Activated CD4-positive, alpha-beta T cell treated with anti-CD3 and anti-CD28 coated beads, Interleukin-2, amount 10 ng/mL, durations not matched to agents 7 days and 5 days (primary cell): ENCODE measurements at regions of chr19 and their contacts with region 1.

Region 1: GRCh38 chr19:18521885-18522624 is at the start of gene ELL:
- DNase-seq: peak; percentile 100
- H3K4me3 Mint-ChIP-seq: peak within 1 kb of the TSS; percentile 89
- H3K27ac Mint-ChIP-seq: peak within 1 kb of the TSS; percentile 97
- H3K4me1 Mint-ChIP-seq: peaks cover 16% of the 10 kb centered on the region
- H3K27me3 Mint-ChIP-seq: no peaks in the 10 kb centered on the region
- total RNA-seq, gene ELL: 20.3 to 20.9 TPM

Region 2: DNA sequence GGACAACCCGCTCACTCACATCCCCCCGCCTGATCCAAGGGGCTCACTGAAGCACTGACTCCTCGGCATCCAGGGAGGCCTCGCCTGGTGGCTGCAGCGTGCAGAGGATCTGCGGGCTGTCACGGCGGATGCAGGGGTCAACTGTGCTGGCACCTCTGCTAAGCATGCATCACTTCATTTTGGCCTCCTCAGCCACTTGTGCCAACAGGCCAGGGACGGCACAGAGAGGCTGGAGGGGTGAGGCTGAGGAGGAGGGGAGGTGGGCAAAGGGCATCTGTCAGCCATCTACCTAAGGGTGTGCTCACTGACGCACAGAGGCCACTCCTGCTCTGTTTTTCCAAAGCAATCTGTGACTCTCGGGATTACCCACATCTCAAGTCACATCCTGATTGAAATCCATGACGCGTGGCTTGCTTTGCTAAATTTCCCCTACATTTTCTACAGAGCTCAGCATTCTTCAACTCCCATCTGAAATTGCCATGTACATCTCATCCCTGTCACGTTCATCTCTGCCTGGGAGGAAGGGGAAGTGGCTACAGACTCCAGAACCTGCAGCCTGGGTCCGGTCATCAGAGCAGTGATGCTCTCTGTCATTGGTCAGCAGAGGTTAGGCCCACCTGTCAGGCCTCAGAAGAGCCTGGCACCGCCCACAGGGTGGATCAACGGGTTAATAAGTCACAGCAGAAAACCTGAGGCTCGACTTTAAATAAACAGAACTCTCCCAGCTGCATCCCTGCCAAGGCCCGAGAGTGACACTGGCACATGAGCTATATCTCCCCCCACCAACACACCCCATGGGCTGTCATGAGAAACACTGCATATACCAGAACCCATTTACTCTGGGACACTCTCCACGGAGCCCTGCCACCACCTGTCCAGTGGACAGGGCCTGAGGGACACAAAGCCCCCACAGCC is 17.8 kb before region 1 on chr19:
- CTCF ChIA-PET with region 1: interaction called, 31 read pairs
- POLR2A ChIA-PET with region 1: no interaction called
- DNase-seq: no peak
- H3K4me3 Mint-ChIP-seq: no peak overlapping the region
- H3K27ac Mint-ChIP-seq: peak overlapping the region; percentile 54
- H3K4me1 Mint-ChIP-seq: peaks cover 88% of the 10 kb centered on the region
- H3K27me3 Mint-ChIP-seq: no peaks in the 10 kb centered on the region

Region 3: DNA sequence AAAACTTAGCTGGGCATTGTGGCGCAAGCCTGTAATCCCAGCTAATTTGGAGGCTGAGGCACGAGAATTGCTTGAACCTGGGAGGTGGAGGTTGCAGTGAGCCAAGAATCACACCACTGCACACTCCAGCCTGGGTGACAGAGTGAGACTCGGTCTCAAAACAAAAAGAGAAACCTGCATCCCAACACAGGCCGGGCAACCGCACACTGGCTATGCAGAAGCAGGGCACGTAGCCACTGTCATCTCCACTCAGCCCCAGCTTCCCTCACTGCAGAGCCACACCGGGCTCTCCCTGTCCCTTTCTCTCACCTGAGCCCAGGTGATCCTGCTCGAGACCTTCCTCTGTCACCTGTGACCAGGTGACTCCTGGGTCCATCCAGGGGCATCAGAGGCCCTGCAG is 11.8 kb before region 1 on chr19:
- CTCF ChIA-PET with region 1: interaction called, 31 read pairs
- POLR2A ChIA-PET with region 1: no interaction called
- DNase-seq: no peak
- H3K4me3 Mint-ChIP-seq: no peak overlapping the region
- H3K27ac Mint-ChIP-seq: no peak overlapping the region
- H3K4me1 Mint-ChIP-seq: peaks cover 41% of the 10 kb centered on the region
- H3K27me3 Mint-ChIP-seq: no peaks in the 10 kb centered on the region

Region 4: GRCh38 chr19:18557474-18558201 is 35.6 kb after region 1 on chr19 and contains the start of gene KXD1:
- CTCF ChIA-PET with region 1: interaction called, 16 read pairs
- POLR2A ChIA-PET with region 1: no interaction called
- DNase-seq: peak; percentile 100
- H3K4me3 Mint-ChIP-seq: peak within 1 kb of the TSS; percentile 83
- H3K27ac Mint-ChIP-seq: peak within 1 kb of the TSS; percentile 97
- H3K4me1 Mint-ChIP-seq: peaks cover 27% of the 10 kb centered on the region
- H3K27me3 Mint-ChIP-seq: no peaks in the 10 kb centered on the region
- total RNA-seq, gene KXD1: 95.4 to 100.0 TPM

Region 5: GRCh38 chr19:18588611-18589379 is 66.7 kb after region 1 on chr19 and contains the start of gene REX1BD:
- CTCF ChIA-PET with region 1: interaction called, 10 read pairs
- POLR2A ChIA-PET with region 1: interaction called, 3 read pairs
- DNase-seq: peak; percentile 89
- H3K4me3 Mint-ChIP-seq: peak within 1 kb of the TSS; percentile 84
- H3K27ac Mint-ChIP-seq: peak within 1 kb of the TSS; percentile 95
- H3K4me1 Mint-ChIP-seq: peaks cover 44% of the 10 kb centered on the region
- H3K27me3 Mint-ChIP-seq: peaks cover 2% of the 10 kb centered on the region
- total RNA-seq, gene REX1BD: 73.0 to 85.2 TPM